ENCODE measurements at regions of chr4 and their contacts with region 1.

Region 1: GRCh38 chr4:38062088-38062893 is 102.1 kb downstream of the PTTG2 start:
- DNase-seq: peak; percentile 84
- H3K4me3 Mint-ChIP-seq: peak overlapping the region; percentile 79
- H3K27ac Mint-ChIP-seq: peak overlapping the region; percentile 75
- H3K4me1 Mint-ChIP-seq: peaks cover 12% of the 10 kb centered on the region
- H3K27me3 Mint-ChIP-seq: no peaks in the 10 kb centered on the region

Region 2: GRCh38 chr4:37710491-37710890 is 351.8 kb before region 1 on chr4:
- CTCF ChIA-PET with region 1: no interaction called
- intact Hi-C with region 1: no loop called
- DNase-seq: no peak
- H3K4me3 Mint-ChIP-seq: no peak overlapping the region
- H3K27ac Mint-ChIP-seq: no peak overlapping the region
- H3K4me1 Mint-ChIP-seq: no peaks in the 10 kb centered on the region
- H3K27me3 Mint-ChIP-seq: peaks cover 4% of the 10 kb centered on the region

Region 3: GRCh38 chr4:37837446-37837845 is 224.8 kb before region 1 on chr4:
- CTCF ChIA-PET with region 1: no interaction called
- intact Hi-C with region 1: no loop called
- DNase-seq: no peak
- H3K4me3 Mint-ChIP-seq: no peak overlapping the region
- H3K27ac Mint-ChIP-seq: peak overlapping the region; percentile 3
- H3K4me1 Mint-ChIP-seq: peaks cover 24% of the 10 kb centered on the region
- H3K27me3 Mint-ChIP-seq: no peaks in the 10 kb centered on the region

Region 4: DNA sequence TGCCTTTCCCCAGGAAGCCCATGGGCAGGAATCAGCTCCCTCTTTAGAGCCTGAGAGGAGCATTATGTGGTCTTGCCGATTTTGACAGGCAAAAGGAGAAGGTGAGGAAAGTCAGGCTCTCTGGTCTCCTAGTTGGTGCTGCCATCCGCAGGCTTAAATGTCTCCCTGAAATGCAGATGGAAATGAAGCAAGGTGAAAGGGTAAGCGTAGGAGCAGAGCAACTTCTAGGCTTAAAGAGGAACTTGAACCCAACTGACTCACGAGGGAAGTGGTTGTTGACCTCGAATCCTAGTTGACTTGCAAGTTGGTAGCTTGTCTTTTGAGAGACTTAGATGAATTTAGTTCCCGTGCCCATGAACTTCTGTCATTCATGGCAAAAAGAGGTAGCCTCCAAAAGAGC is 103.8 kb after region 1 on chr4:
- CTCF ChIA-PET with region 1: no interaction called
- intact Hi-C with region 1: loop called (anchors 1 kb)
- DNase-seq: peak; percentile 33
- H3K4me3 Mint-ChIP-seq: no peak overlapping the region
- H3K27ac Mint-ChIP-seq: no peak overlapping the region
- H3K4me1 Mint-ChIP-seq: peaks cover 54% of the 10 kb centered on the region
- H3K27me3 Mint-ChIP-seq: no peaks in the 10 kb centered on the region

Region 5: DNA sequence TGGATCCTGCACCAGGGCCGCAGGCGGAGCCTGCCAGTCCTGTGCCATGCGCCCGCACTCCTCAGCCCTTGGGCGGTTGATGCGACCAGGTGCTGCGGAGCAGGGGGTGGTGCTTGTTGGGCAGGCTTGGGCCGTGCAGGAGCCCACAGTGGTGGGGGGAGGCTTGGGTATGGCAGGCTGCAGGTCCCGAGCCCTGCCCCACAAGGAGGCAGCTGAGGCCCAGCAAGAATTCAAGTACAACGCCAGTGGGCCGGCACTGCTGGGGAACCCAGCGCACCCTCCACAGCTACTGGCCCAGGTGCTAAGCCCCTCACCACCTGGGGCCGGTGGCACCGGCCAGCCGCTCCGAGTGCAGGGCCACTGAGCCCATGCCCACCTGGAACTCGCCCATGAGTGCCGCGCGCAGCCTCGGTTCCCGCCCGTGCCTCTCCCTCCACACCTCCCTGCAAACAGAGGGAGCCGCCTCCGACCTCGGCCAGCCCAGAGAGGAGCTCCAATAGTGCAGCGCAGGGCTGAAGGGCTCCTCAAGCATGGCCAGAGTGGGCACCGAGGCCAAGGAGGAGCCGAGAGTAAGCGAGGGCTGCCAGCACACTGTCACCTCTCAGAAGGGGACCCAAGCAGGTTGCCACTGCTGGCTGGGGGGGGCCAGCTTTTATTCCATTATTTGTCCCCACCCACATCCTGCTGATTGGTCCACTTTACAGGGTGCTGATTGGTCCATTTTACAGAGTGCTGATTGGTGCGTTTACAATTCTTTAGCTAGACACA is 262.8 kb after region 1 on chr4:
- CTCF ChIA-PET with region 1: no interaction called
- intact Hi-C with region 1: no loop called
- DNase-seq: peak; percentile 5
- H3K4me3 Mint-ChIP-seq: no peak overlapping the region
- H3K27ac Mint-ChIP-seq: no peak overlapping the region
- H3K4me1 Mint-ChIP-seq: peaks cover 72% of the 10 kb centered on the region
- H3K27me3 Mint-ChIP-seq: no peaks in the 10 kb centered on the region

Region 6: DNA sequence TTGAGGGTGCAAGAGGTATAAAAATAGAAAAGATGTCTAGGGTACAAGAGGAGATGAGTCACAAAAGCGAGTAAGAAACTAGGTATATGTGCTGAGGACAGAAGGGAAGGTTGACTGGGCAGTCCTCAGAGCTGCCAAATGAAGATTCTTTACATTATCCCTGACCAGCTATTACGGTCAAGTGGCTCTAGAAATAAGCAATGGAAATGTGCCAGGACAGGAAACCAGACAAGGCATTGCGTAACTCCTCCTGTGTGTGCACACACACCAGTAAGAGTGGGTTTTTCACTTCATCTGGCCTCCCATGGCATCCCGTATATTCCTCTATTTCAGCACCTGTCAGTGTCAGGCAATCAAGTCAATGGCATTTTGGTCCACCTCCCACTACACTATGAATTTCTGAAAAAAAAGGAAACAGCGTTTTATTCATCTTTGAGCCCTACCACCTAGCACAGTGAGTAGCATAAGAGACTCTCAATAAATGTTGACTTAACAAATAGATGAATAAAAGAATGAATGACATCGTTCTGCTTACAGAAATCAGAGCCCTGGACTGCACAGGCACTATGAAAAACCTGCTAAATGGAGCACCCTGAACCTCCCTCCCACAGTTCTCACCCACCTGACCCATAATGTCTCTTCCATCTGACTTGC is 539.1 kb after region 1 on chr4:
- CTCF ChIA-PET with region 1: no interaction called
- intact Hi-C with region 1: loop called (anchors 10 kb)
- DNase-seq: no peak
- H3K4me3 Mint-ChIP-seq: no peak overlapping the region
- H3K27ac Mint-ChIP-seq: no peak overlapping the region
- H3K4me1 Mint-ChIP-seq: peaks cover 20% of the 10 kb centered on the region
- H3K27me3 Mint-ChIP-seq: no peaks in the 10 kb centered on the region

Measured in activated naive CD4-positive, alpha-beta T cell treated with anti-CD3 and anti-CD28 coated beads for 36 hours (primary cell).